ENCODE measurements at regions of chr22 and their contacts with region 1.

Region 1: GRCh38 chr22:21726650-21727049 is 8.9 kb downstream of the YPEL1 start:
- DNase-seq: peak; percentile 36 to 74
- H3K4me3 ChIP-seq: no peak overlapping the region
- H3K27ac ChIP-seq: no peak overlapping the region
- H3K4me1 ChIP-seq: peaks cover 3 to 5% (median 4%) of the 10 kb centered on the region in 4 experiments; a peak in 6 of 7 replicates
- H3K27me3 ChIP-seq: no peaks in the 10 kb centered on the region
- CTCF ChIP-seq: peak; percentile 69 to 85 (median 70)
- EP300 ChIP-seq: no peak
- POLR2A ChIP-seq: no peak
- RAD21 ChIP-seq: peak; percentile 68 to 77

Region 2: DNA sequence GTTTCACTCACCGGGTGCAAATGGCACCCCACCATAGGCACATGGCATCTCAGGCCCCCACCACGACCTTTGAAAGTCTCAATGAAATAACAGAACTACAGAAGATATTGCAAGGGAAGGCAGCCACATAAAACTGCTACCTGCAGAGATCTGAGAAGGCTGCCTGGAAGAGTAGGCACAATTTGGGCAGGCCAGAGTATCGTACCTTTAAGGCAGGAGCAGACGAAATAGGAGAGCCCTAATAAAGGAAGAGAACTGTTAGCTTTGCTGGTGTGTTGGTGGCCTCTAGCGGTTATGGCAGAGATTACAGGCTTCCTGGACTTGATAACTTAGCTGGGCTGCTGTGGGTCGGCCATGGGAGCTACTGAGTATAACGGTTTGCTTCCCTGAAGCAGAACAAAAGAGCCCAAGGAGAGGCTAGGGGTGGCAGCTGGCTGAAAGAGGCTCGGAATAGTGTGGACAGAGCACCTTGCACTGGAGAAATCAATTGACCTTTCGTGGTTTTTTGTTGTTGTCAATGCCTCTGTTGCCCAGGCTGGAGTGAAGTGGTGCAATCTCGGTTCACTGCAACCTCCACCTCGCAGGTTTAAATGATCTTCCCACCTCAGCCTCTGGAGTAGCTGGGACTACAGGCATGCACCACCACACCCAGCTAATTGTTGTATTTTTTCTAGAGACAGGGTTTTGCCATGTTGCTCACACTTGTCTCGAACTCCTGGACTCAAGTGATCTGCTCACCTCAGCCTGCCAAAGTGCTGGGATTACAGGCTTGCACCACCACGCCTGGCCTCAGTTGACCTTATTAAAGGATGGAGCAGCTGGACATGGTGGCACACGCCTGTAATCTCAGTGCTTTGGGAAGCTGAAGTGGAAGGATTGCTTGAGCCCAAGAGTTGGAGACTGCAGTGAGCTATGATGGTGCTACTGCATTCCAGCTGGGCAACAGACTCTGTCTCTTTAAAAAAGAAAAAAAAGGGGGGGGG is 79.8 kb before region 1 on chr22:
- CTCF ChIA-PET with region 1: no interaction called
- POLR2A ChIA-PET with region 1: no interaction called
- DNase-seq: peak in 1 of 2 experiments; percentile 82
- H3K4me3 ChIP-seq: no peak overlapping the region
- H3K27ac ChIP-seq: no peak overlapping the region
- H3K4me1 ChIP-seq: peaks cover 0 to 11% (median 6%) of the 10 kb centered on the region in 4 experiments; a peak in 5 of 7 replicates
- H3K27me3 ChIP-seq: no peaks in the 10 kb centered on the region
- CTCF ChIP-seq: peak; percentile 60 to 89 (median 88)
- EP300 ChIP-seq: no peak
- POLR2A ChIP-seq: no peak
- RAD21 ChIP-seq: peak; percentile 87 to 94

Region 3: GRCh38 chr22:21707677-21708076 is 19.0 kb before region 1 on chr22:
- CTCF ChIA-PET with region 1: interaction called, 13 read pairs
- POLR2A ChIA-PET with region 1: interaction called, 3 read pairs
- DNase-seq: no peak
- H3K4me3 ChIP-seq: no peak overlapping the region
- H3K27ac ChIP-seq: no peak overlapping the region
- H3K4me1 ChIP-seq: no peaks in the 10 kb centered on the region
- H3K27me3 ChIP-seq: no peaks in the 10 kb centered on the region
- CTCF ChIP-seq: no peak
- EP300 ChIP-seq: no peak
- POLR2A ChIP-seq: no peak
- RAD21 ChIP-seq: no peak

Region 4: GRCh38 chr22:21712894-21713712 is 13.5 kb before region 1 on chr22:
- CTCF ChIA-PET with region 1: interaction called, 45 read pairs
- POLR2A ChIA-PET with region 1: interaction called, 3 read pairs
- DNase-seq: peak in 1 of 2 experiments; percentile 59
- H3K4me3 ChIP-seq: no peak overlapping the region
- H3K27ac ChIP-seq: no peak overlapping the region
- H3K4me1 ChIP-seq: no peaks in the 10 kb centered on the region
- H3K27me3 ChIP-seq: no peaks in the 10 kb centered on the region
- CTCF ChIP-seq: peak; percentile 70 to 83 (median 73)
- EP300 ChIP-seq: no peak
- POLR2A ChIP-seq: no peak
- RAD21 ChIP-seq: peak; percentile 69 to 75